Motor neuron (in vitro differentiated cells): ENCODE measurements at regions of chr16 and their contacts with region 1.

Region 1: GRCh38 chr16:19094541-19095365 is 19.0 kb upstream of the ITPRIPL2 start:
- ATAC-seq: no peak
- H3K4me3 ChIP-seq: no peak overlapping the region
- H3K27ac ChIP-seq: no peak overlapping the region
- H3K4me1 ChIP-seq: no peaks in the 10 kb centered on the region

Region 2: DNA sequence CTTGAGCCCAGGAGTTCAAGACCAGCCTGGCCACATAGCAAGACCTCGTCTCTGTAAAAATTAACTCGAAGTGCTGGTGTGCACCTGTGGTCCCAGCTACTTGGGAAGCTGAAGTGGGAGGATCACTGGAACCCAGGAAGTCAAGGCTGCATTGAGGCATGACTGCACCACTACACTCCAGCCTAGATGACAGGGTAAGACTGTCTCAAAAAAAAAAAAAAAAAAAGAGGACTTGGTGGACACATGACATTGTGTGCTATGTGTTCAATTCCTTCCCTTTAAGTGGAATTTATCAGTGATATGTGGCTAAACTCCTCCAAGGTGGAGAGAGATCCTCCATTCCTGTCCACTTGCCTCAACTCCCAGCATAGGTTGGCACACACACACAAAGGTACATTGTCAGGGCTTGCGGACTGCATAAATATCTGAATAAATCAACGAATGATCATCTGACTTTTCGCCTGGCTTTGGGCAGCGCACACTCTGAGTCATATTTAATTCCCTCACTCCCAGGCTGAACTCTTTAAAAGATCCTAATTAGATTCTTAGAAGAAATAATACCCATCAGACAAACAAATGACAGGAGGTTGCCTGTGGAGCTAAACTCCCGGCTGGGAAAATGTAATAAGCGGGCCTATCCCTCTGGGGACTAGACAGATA is 48.3 kb after region 1 on chr16:
- in situ Hi-C with region 1: no loop called
- ATAC-seq: peak in 5 of 8 experiments; percentile 88 to 97 (median 92)
- H3K4me3 ChIP-seq: no peak overlapping the region
- H3K27ac ChIP-seq: no peak overlapping the region
- H3K4me1 ChIP-seq: peaks cover 15% of the 10 kb centered on the region in 2 donors

Region 3: GRCh38 chr16:19179546-19180490 is 85.1 kb after region 1 on chr16:
- in situ Hi-C with region 1: loop called in 1 of 9 experiments (anchors 10 kb)
- ATAC-seq: peak in 3 of 8 experiments; percentile 85 to 94 (median 87)
- H3K4me3 ChIP-seq: no peak overlapping the region
- H3K27ac ChIP-seq: no peak overlapping the region
- H3K4me1 ChIP-seq: no peaks in the 10 kb centered on the region

Region 4: GRCh38 chr16:19375561-19376158 is 280.9 kb after region 1 on chr16:
- in situ Hi-C with region 1: loop called in 8 of 9 experiments (anchors 5 to 25 kb)
- ATAC-seq: peak; percentile 52 to 81 (median 66)
- H3K4me3 ChIP-seq: no peak overlapping the region
- H3K27ac ChIP-seq: no peak overlapping the region
- H3K4me1 ChIP-seq: no peaks in the 10 kb centered on the region